ENCODE measurements at regions of chr20 and their contacts with region 1.

Region 1: GRCh38 chr20:52001999-52002666 is 189.4 kb downstream of the ZFP64 start:
- DNase-seq: peak; percentile 93
- H3K4me3 ChIP-seq: no peak overlapping the region
- H3K27ac ChIP-seq: peak overlapping the region; percentile 85
- H3K4me1 ChIP-seq: peaks cover 17% of the 10 kb centered on the region
- H3K27me3 ChIP-seq: no peaks in the 10 kb centered on the region
- CTCF ChIP-seq: peak; percentile 34 to 49
- POLR2A ChIP-seq: no peak

Region 2: GRCh38 chr20:51958096-51959065 is 43.8 kb before region 1 on chr20:
- CTCF ChIA-PET with region 1: no interaction called
- POLR2A ChIA-PET with region 1: no interaction called
- dilution Hi-C with region 1: no loop called
- intact Hi-C with region 1: loop called (anchors 1 kb)
- DNase-seq: no peak
- H3K4me3 ChIP-seq: peak overlapping the region in 1 of 3 experiments; percentile 49
- H3K27ac ChIP-seq: peak overlapping the region; percentile 58
- H3K4me1 ChIP-seq: peaks cover 24% of the 10 kb centered on the region
- H3K27me3 ChIP-seq: no peaks in the 10 kb centered on the region
- CTCF ChIP-seq: no peak
- POLR2A ChIP-seq: no peak

Region 3: DNA sequence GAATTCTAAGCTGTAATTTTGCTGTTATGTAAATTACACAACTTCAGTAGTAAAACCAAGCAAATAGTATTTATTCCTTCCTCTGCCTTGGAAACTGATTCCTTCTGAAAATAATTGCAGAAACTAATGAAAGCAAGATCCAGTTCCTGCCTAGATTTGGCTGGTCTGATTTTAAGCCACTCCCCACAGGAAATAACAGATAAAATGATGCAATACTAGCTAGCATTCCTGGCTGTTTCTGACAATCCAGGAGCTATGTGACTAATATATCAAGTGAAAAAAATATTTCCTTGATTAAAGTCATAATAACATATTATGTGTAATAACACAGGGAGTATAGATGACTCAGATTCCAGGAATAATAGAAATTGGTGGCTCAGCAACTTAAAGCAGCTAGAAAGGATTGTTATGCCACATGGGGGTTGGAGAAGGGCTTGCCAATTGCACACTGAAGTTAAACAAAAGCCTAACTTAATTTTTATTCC is 17.2 kb before region 1 on chr20:
- CTCF ChIA-PET with region 1: interaction called, 7 read pairs
- POLR2A ChIA-PET with region 1: interaction called, 3 read pairs
- dilution Hi-C with region 1: no loop called
- intact Hi-C with region 1: loop called (anchors 1 kb)
- DNase-seq: peak; percentile 96
- H3K4me3 ChIP-seq: no peak overlapping the region
- H3K27ac ChIP-seq: peak overlapping the region; percentile 82
- H3K4me1 ChIP-seq: peaks cover 13% of the 10 kb centered on the region
- H3K27me3 ChIP-seq: no peaks in the 10 kb centered on the region
- CTCF ChIP-seq: no peak
- POLR2A ChIP-seq: no peak

Region 4: GRCh38 chr20:52031563-52032303 is 29.6 kb after region 1 on chr20:
- CTCF ChIA-PET with region 1: interaction called, 6 read pairs
- POLR2A ChIA-PET with region 1: no interaction called
- dilution Hi-C with region 1: no loop called
- intact Hi-C with region 1: loop called (anchors 1 kb)
- DNase-seq: peak; percentile 98
- H3K4me3 ChIP-seq: no peak overlapping the region
- H3K27ac ChIP-seq: peak overlapping the region; percentile 95
- H3K4me1 ChIP-seq: peaks cover 28% of the 10 kb centered on the region
- H3K27me3 ChIP-seq: no peaks in the 10 kb centered on the region
- CTCF ChIP-seq: no peak
- POLR2A ChIP-seq: no peak

Region 5: DNA sequence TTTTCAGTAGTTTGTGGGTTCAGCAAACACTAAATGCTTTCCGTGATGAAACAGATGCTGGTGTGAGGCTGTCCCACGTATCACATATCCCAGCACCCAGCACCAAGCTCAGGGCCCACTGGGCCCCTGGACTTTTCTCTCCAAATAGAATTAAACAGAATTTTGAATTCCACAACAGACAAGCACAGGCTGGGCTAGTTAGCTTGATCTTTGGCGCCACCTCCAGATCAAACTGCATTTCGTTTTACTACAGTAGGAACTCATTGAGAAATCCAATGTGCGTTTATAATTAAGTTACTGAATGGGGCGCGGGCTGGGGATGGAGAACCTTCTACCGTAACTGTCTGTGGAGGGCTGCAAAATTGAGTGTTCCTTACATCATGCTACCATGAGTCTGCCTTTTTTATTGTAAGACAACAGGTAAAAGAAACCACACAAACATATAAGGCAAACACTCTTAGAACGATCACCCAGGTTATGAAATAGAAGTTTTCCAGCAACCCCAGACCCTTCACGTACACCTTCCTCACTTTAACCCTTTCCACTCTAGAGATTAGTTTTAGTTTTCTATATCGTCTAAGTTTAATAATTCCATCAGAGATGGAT is 81.6 kb after region 1 on chr20:
- CTCF ChIA-PET with region 1: interaction called, 3 read pairs
- POLR2A ChIA-PET with region 1: no interaction called
- dilution Hi-C with region 1: no loop called
- intact Hi-C with region 1: loop called (anchors 1 kb)
- DNase-seq: peak; percentile 75
- H3K4me3 ChIP-seq: no peak overlapping the region
- H3K27ac ChIP-seq: no peak overlapping the region
- H3K4me1 ChIP-seq: no peaks in the 10 kb centered on the region
- H3K27me3 ChIP-seq: no peaks in the 10 kb centered on the region
- CTCF ChIP-seq: peak; percentile 51 to 56
- POLR2A ChIP-seq: no peak

Measured in endothelial cell of umbilical vein (primary cell).